ENCODE measurements at regions of chr4 and their contacts with region 1.

Region 1: DNA sequence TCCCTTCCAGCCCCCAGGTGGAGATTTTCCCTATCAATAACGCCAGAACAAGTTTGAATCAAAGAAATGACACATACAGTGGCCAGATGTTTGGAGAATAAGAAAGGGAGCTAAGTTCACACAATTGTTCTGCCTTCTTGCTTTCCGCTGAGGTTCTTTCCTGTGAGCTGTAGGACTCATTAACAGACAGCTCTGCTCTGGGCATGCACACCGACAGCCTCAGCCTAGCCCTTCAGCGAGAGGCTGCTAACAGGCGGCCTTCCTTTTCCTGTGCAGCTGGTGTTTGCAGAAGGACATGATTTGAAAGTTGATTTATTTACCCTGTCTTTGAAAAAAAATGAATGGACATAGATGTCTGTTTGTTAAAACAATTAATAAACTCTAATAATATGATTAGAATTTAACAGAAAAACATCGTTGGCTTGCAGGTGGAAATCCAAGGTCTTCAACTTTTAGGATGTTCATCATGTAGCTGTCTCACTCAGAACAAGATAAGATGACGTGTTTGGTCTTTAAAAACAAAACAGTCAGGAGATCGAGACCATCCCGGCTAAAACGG is 183.3 kb downstream of the KDR start:
- DNase-seq: no peak

Region 2: DNA sequence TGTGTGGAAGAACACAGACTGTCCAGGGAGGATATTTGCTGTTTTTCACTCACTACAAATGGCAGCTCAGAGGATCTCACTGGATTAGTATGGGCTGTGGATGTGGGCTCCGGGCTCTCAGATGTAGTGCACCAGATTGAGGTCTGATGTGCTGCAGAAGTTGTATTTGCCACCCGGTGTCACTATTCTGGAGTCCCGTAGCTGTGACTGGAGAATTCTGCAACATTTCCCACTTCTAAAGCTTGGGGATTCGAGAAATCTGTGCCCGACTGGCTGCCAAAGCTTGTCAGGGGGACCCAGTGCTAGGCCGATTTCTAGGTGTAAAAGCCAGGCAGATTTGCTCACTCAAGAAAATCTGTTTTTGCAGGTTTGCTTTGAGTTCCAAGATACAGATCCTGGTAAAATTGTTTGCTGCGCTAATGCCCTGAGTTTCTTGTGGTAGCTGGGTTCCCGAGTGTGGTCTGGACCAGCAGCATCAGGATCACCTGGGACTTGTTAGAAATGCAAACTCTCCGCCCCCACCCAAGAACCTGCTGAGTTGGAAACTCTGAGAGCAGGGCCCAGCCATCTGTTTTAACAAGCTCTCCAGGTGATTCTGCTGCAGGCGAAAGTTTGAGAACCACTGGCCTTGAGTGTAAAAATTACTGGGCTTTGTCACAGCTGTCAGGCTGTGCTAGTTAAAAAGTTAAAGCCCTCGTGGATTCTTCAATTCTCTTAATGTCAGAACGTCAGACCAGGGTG is 266.2 kb before region 1 on chr4:
- intact Hi-C with region 1: loop called (anchors 10 kb)
- DNase-seq: no peak

Measured in cardiac septum (tissue), 1 donor.